HepG2 (cell line): ENCODE measurements at regions of chr17 and their contacts with region 1.

Region 1: GRCh38 chr17:58382108-58382871 is 30.3 kb upstream of the SUPT4H1 start:
- DNase-seq: peak; percentile 60
- ATAC-seq: peak; percentile 32
- H3K4me3 ChIP-seq: peak overlapping the region in 1 of 3 experiments; percentile 5; a peak in 1 of 6 replicates
- H3K27ac ChIP-seq: peak overlapping the region; percentile 93
- H3K4me1 ChIP-seq: peaks cover 100% of the 10 kb centered on the region
- H3K27me3 ChIP-seq: no peaks in the 10 kb centered on the region
- CTCF ChIP-seq: 0 out of 2 replicates have a peak, but pooled peaks have one; percentile 9
- EP300 ChIP-seq: no peak; a peak in 1 of 4 replicates
- POLR2A ChIP-seq: peak in 1 of 2 experiments; percentile 40; a peak in 1 of 4 replicates
- RAD21 ChIP-seq: no peak

Region 2: DNA sequence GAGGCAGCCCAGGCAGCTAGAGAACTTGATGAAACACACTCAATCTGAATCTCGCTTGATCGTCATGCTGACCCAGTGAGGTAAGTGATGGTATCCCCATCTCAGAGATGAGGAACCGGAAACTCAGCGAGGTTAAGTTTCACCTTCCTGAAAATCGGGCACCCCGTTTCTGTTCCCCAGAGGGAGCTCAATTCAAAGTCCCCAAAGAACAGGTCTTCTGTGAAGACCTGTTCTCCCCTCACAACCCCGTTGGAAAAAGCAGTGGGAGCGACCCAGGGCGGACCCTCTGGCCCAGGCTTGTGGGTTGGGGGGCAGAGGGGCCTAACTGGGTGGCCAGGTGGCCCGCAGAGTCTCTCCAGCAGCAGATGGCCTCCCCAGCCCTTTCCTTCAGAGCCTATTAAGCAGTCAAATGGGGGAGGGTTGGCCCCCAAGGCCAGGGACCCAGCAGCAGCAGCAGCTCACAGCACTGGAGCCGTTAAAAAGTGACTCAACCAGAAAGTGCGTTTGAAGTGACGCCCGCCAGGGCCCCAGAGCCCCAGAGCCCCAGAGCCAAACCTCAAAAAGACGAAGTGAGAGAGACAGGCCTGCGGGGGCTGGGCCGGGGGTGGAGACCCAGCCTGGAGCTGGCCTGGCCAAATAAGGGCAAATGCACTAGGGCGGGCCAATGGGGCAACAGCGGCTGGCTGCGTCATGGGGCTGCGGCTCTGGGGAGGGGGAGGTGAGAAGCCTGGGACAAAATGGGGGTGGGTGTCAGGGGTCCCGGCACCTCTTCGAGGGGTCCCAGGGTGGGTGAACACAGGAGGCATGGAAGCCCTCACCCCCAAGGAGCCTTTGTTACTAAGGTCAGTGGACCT is 44.5 kb before region 1 on chr17:
- CTCF ChIA-PET with region 1: no interaction called
- POLR2A ChIA-PET with region 1: interaction called, 25 read pairs
- in situ Hi-C with region 1: no loop called
- intact Hi-C with region 1: loop called (anchors 1 kb)
- DNase-seq: peak; percentile 82
- ATAC-seq: peak; percentile 71
- H3K4me3 ChIP-seq: peak overlapping the region; percentile 3 to 60 (median 5); a peak in 3 of 6 replicates
- H3K27ac ChIP-seq: peak overlapping the region; percentile 24
- H3K4me1 ChIP-seq: peaks cover 62% of the 10 kb centered on the region
- H3K27me3 ChIP-seq: no peaks in the 10 kb centered on the region
- CTCF ChIP-seq: no peak
- EP300 ChIP-seq: no peak
- POLR2A ChIP-seq: no peak
- RAD21 ChIP-seq: no peak

Region 3: DNA sequence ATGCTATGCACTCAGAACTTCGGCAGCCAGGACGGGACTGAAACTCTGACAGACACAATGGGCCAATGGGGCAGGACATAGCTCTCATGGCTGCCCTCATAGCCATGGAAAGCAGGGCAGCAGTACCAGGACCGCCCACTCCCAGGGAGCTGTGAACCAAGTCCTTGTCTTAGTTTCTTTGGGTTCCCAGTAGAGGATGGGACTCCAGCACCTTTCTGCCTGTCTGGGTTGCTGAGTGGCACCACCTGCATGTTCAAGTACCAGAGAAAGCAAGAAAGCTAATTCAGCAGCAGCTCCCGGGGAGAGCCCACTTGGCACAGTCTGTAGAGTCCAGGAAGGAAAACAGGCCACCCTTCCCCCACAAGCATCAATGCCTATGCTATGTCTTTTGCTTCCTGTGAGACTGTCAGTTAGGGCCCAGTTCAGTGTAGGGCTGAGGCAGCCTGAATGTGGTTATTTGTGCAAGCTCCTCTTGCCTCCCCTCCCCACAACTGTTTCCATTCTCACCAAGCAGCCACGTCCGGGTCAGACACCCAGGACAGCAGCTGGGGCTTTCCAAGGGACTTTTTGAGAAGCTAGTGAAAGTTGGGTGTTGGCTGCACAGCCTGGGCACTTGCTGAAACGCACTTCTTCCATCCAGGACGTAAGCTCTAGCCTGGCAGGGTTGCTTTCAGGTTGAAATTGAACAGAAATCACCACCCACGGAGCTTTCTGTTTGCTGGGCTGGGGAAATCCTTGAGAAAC is 38.1 kb before region 1 on chr17:
- CTCF ChIA-PET with region 1: no interaction called
- POLR2A ChIA-PET with region 1: interaction called, 25 read pairs
- in situ Hi-C with region 1: no loop called
- intact Hi-C with region 1: no loop called
- DNase-seq: no peak
- ATAC-seq: peak; percentile 10
- H3K4me3 ChIP-seq: no peak overlapping the region
- H3K27ac ChIP-seq: no peak overlapping the region
- H3K4me1 ChIP-seq: peaks cover 5% of the 10 kb centered on the region
- H3K27me3 ChIP-seq: no peaks in the 10 kb centered on the region
- CTCF ChIP-seq: no peak
- EP300 ChIP-seq: no peak
- POLR2A ChIP-seq: peak; percentile 18 to 39; a peak in 3 of 4 replicates
- RAD21 ChIP-seq: no peak

Region 4: GRCh38 chr17:58364270-58364942 is 17.9 kb before region 1 on chr17:
- CTCF ChIA-PET with region 1: no interaction called
- POLR2A ChIA-PET with region 1: interaction called, 458 read pairs
- in situ Hi-C with region 1: no loop called
- intact Hi-C with region 1: loop called (anchors 1 kb)
- DNase-seq: peak; percentile 84
- ATAC-seq: peak; percentile 92
- H3K4me3 ChIP-seq: peak overlapping the region in 1 of 3 experiments; percentile 32; a peak in 2 of 6 replicates
- H3K27ac ChIP-seq: peak overlapping the region; percentile 89
- H3K4me1 ChIP-seq: peaks cover 94% of the 10 kb centered on the region
- H3K27me3 ChIP-seq: no peaks in the 10 kb centered on the region
- CTCF ChIP-seq: peak; percentile 16; the same call in 1 of the 2 replicates
- EP300 ChIP-seq: peak in 1 of 2 experiments; percentile 80; a peak in 1 of 4 replicates
- POLR2A ChIP-seq: peak; percentile 20 to 58; a peak in 1 of 4 replicates
- RAD21 ChIP-seq: peak; percentile 1

Region 5: DNA sequence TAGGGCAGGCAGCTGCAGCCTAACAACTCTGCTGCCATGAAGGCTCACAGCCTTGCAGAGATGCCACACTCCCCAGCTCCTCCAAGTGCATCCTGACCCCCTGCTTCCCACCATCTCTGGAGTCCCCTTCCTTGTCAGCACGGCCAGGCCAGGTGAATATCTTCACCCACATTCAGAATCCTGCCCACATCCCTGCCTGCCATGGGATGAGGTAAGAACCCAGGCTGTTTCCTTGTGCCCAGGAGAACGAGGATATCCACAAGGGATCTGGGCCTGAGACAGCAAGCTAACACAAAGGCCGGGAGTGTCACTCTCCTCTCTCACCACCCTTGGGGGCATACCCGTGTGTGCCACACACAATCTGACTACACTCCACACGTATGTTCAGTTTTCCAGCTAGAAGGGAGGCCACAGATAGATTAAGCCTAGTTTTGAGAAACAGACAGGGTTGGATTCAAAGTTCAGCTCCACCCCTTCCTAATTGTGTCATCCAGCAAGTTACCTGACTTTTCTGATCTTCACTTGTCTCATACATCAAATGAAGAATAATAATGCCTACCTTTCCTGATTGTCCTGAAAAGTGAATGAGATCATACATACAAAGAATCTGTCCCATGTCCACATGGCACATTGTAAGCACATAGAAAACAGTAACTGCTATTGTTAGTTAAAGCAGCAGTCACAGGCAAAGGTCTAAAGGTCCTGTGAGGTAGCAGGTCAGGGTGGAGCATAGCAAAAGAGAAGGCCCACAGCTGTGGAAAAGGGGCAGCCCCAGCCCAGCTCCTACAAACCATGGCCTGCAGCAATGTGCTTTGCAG is 12.9 kb before region 1 on chr17:
- CTCF ChIA-PET with region 1: no interaction called
- POLR2A ChIA-PET with region 1: interaction called, 458 read pairs
- in situ Hi-C with region 1: no loop called
- intact Hi-C with region 1: loop called (anchors 1 kb)
- DNase-seq: peak; percentile 97
- ATAC-seq: peak; percentile 93
- H3K4me3 ChIP-seq: peak overlapping the region in 2 of 3 experiments; percentile 1 to 47; a peak in 3 of 6 replicates
- H3K27ac ChIP-seq: peak overlapping the region; percentile 92
- H3K4me1 ChIP-seq: peaks cover 97% of the 10 kb centered on the region
- H3K27me3 ChIP-seq: no peaks in the 10 kb centered on the region
- CTCF ChIP-seq: no peak
- EP300 ChIP-seq: peak in 1 of 2 experiments; percentile 58; a peak in 2 of 4 replicates
- POLR2A ChIP-seq: peak; percentile 12 to 31; a peak in 2 of 4 replicates
- RAD21 ChIP-seq: peak; percentile 35

Region 6: DNA sequence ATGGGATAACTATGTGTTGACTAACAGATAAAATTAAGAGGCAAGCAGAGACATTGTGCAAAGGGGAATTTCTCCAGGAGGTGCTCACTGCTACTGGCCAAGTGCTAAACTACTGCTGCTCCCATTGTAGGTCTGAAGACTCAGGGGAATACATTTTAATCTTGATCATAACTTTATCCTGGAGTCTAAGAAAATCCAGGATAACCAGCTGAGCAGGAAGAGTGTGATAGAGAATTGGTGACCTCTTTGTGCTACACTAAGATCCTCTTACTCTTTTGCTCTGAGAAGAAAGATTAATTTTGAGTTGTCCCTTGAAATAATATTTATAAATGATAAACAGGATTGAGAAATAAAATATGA is 29.1 kb after region 1 on chr17:
- CTCF ChIA-PET with region 1: no interaction called
- POLR2A ChIA-PET with region 1: interaction called, 242 read pairs
- in situ Hi-C with region 1: no loop called
- intact Hi-C with region 1: no loop called
- DNase-seq: no peak
- ATAC-seq: no peak
- H3K4me3 ChIP-seq: peak overlapping the region; percentile 73 to 88 (median 81)
- H3K27ac ChIP-seq: peak overlapping the region; percentile 77
- H3K4me1 ChIP-seq: peaks cover 64% of the 10 kb centered on the region
- H3K27me3 ChIP-seq: no peaks in the 10 kb centered on the region; a peak in 2 of 5 replicates
- CTCF ChIP-seq: no peak
- EP300 ChIP-seq: no peak
- POLR2A ChIP-seq: no peak
- RAD21 ChIP-seq: no peak

Region 7: GRCh38 chr17:58432806-58433572 is 50.7 kb after region 1 on chr17:
- CTCF ChIA-PET with region 1: no interaction called
- POLR2A ChIA-PET with region 1: no interaction called
- in situ Hi-C with region 1: no loop called
- intact Hi-C with region 1: no loop called
- DNase-seq: no peak
- ATAC-seq: 0 out of 3 replicates have a peak, but pooled peaks have one; percentile 32
- H3K4me3 ChIP-seq: no peak overlapping the region
- H3K27ac ChIP-seq: no peak overlapping the region
- H3K4me1 ChIP-seq: 0 out of 2 replicates have a peak, but pooled peaks cover 5% of the 10 kb centered on the region
- H3K27me3 ChIP-seq: peaks cover 0 to 10% of the 10 kb centered on the region in 2 experiments; a peak in 1 of 5 replicates
- CTCF ChIP-seq: no peak
- EP300 ChIP-seq: no peak
- POLR2A ChIP-seq: no peak
- RAD21 ChIP-seq: no peak

Region 8: DNA sequence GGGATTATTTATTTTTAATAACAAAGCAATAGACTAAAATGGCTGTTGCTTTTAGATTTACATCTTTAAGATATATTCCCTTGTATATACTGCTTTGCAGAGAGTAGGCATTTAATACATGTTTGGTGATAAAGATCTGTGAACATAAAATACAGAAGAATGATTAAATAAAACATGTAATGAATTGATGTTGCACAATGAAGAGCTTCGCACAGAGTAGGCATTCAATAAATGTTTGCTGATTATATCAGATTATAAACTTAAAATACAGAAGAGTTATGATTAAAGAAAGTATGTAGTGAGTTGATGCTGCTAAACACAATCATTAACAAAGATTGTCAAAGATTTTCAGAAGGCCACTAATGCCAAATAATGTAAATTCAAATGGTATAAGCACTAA is 81.5 kb after region 1 on chr17:
- CTCF ChIA-PET with region 1: no interaction called
- POLR2A ChIA-PET with region 1: no interaction called
- in situ Hi-C with region 1: no loop called
- intact Hi-C with region 1: no loop called
- DNase-seq: no peak
- ATAC-seq: no peak
- H3K4me3 ChIP-seq: no peak overlapping the region
- H3K27ac ChIP-seq: no peak overlapping the region
- H3K4me1 ChIP-seq: no peaks in the 10 kb centered on the region
- H3K27me3 ChIP-seq: no peaks in the 10 kb centered on the region
- CTCF ChIP-seq: no peak
- EP300 ChIP-seq: no peak
- POLR2A ChIP-seq: no peak
- RAD21 ChIP-seq: no peak